ENCODE measurements at regions of chr2 and their contacts with region 1.

Region 1: GRCh38 chr2:55419679-55420438 is at the start of gene CCDC88A:
- DNase-seq: peak; percentile 89 to 97 (median 93)
- H3K4me3 ChIP-seq: peak within 1 kb of the TSS; percentile 70 to 96 (median 88)
- H3K27ac ChIP-seq: peak within 1 kb of the TSS; percentile 86 to 99 (median 98)
- H3K27me3 ChIP-seq: no peaks in the 10 kb centered on the region
- CTCF ChIP-seq: peak in 46 of 56 donors; percentile 11 to 65 (median 38)
- total RNA-seq, gene CCDC88A: 151 to 514 (median 261) TPM

Region 2: GRCh38 chr2:55268907-55269644 is 150.8 kb before region 1 on chr2 and contains the start of gene MTIF2:
- intact Hi-C with region 1: loop called in 1 of 2 experiments (anchors 5 kb)
- DNase-seq: peak; percentile 88 to 95 (median 93)
- H3K4me3 ChIP-seq: peak within 1 kb of the TSS; percentile 52 to 96 (median 82)
- H3K27ac ChIP-seq: peak within 1 kb of the TSS; percentile 46 to 95 (median 88)
- H3K27me3 ChIP-seq: no peaks in the 10 kb centered on the region
- CTCF ChIP-seq: peak in 53 of 56 donors; percentile 16 to 66 (median 46)
- total RNA-seq, gene MTIF2: 15.2 to 33.5 (median 24.3) TPM

Region 3: DNA sequence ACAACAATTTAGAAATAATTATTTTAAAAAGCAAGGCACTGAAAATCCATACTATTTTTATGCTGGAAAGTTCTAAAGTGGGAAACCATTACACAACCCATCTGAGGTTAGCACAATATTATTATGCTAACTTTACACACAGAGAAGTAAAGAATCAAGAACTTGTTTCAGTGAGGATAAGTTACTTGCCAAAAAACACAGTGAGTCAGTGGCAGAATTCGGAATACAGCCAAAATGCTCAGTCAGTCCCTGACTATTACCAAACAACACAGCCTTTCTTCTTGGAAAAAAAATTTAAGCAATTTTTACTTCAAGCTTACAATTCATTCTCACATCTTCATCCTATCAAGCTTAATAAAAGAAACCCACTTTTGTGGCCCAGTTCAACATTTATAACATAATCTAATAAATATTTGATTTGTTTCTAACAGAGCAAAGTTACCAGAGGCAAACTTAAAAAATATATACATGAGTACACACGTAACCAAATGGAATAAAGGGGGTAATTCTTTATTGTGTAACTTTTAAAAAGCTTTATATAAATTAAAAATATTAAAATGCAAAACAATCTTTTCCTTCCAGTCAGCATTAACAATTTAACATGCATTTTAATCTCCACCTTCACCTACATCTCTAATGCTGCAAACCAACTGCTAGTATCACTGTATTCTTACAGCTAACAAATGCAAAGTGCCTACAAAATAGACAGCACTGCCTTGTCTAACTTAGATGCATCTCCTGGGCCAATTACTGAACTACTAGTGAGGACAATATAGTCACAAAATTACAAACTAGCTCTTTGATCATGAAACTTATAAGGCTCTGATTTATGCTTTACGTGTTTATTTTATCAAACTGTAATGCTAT is 55.4 kb before region 1 on chr2:
- intact Hi-C with region 1: loop called (anchors 1 to 5 kb)
- DNase-seq: peak in 2 of 10 donors; percentile 44 to 70
- H3K4me3 ChIP-seq: peak overlapping the region in 42 of 59 donors; percentile 3 to 52 (median 16)
- H3K27ac ChIP-seq: peak overlapping the region; percentile 22 to 97 (median 91)
- H3K27me3 ChIP-seq: no peaks in the 10 kb centered on the region
- CTCF ChIP-seq: peak in 9 of 56 donors; percentile 2 to 23 (median 11)

Region 4: GRCh38 chr2:55451699-55452098 is 31.8 kb after region 1 on chr2:
- intact Hi-C with region 1: no loop called
- DNase-seq: no peak
- H3K4me3 ChIP-seq: no peak overlapping the region
- H3K27ac ChIP-seq: no peak overlapping the region
- H3K27me3 ChIP-seq: no peaks in the 10 kb centered on the region
- CTCF ChIP-seq: no peak